GM10248 (cell line): ENCODE measurements at regions of chr12 and their contacts with region 1.

Region 1: GRCh38 chr12:108838194-108839017 is 19.0 kb downstream of the SSH1 start:
- DNase-seq: peak; percentile 80
- CTCF ChIP-seq: no peak

Region 2: GRCh38 chr12:108826101-108826806 is 12.2 kb before region 1 on chr12:
- CTCF ChIA-PET with region 1: interaction called, 12 read pairs
- POLR2A ChIA-PET with region 1: interaction called, 4 read pairs
- DNase-seq: peak; percentile 49
- CTCF ChIP-seq: no peak